Left cardiac atrium (tissue), 4 donors: ENCODE measurements at regions of chr6 and their contacts with region 1.

Region 1: DNA sequence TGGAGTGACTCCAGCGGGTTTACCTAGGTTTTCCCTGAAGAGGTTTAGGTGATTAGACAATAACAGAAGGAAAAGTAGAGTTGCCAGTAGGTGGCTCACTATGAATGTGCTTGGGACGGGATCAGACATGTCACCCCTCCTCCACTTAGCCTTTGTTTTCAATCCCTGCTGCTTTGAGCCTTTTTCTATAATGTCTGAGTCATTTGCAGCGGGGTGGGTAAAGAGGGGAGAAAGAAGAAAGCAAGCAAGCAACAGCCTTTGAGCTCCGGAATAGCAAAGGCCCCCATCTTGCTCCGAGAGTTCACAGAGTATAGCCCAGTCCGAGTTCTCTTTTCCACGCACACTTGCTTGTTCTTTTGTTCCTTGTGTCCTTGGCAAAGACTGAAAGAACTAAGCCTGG is 129.1 kb downstream of the PACRG start:
- DNase-seq: no peak
- ATAC-seq: peak; percentile 90 to 94

Region 2: GRCh38 chr6:162899148-162899547 is 42.3 kb after region 1 on chr6:
- intact Hi-C with region 1: no loop called
- DNase-seq: no peak
- ATAC-seq: no peak

Region 3: GRCh38 chr6:162951164-162951743 is 94.4 kb after region 1 on chr6:
- intact Hi-C with region 1: no loop called
- DNase-seq: no peak
- ATAC-seq: no peak

Region 4: DNA sequence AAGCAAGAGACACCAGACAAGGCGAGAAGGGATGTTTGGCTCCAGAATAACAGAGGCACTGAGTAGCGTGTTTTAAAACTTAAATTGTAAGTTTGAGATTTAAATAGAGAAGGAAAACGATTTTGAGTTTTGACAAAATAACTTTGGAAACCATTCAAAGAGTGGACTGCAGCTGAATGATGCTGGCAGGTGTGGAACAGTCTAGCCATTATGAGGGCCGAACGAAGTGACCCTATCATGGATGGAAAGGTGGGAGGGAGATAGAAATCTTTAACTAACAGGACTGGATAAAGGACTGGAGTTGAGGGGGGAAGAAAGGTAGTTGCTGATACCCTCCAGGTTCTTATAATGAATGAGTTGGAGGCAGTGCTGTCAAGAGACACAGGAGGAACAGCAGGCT is 119.3 kb after region 1 on chr6:
- intact Hi-C with region 1: no loop called
- DNase-seq: no peak
- ATAC-seq: no peak

Region 5: DNA sequence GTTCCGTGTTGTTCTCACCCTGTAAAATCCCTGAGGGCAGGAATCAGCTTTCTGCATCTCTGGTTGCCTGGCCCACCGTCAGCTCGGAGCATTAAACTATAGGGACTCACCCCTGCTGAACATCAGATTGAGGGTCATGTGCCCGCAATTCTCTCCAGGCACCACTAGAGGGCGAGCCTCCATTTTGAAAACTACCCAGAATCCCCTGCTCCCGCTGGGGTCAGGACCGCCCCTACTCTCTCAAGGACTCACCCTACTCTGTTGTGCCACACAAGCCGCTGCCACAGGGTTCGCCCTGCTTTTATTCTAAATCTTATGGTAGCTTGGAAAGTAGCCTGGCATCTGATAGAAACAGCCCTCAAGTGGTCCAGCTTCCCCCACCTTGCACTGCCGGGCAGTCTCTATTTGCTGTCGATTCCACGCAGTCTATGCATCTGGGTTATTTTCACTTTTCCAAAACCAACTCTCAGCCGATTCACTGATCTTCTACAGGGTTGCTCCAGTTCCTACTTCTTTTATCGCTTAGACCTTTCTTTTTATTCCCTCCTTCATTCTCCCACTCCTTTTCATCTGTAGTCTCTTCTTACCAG is 313.5 kb after region 1 on chr6:
- intact Hi-C with region 1: loop called in 1 of 2 experiments (anchors 10 kb)
- DNase-seq: no peak
- ATAC-seq: no peak